Activated T-helper 2 cell treated with anti-CD3 and anti-CD28 coated beads, Interferon-gamma antibody, Interleukin-2, Interleukin-4, amounts not matched to agents 10 μg/mL and 5 μg/mL and 100 μg/mL, durations not matched to agents 14 hours and 24 hours and 36 hours (primary cell): ENCODE measurements at regions of chr7 and their contacts with region 1.

Region 1: DNA sequence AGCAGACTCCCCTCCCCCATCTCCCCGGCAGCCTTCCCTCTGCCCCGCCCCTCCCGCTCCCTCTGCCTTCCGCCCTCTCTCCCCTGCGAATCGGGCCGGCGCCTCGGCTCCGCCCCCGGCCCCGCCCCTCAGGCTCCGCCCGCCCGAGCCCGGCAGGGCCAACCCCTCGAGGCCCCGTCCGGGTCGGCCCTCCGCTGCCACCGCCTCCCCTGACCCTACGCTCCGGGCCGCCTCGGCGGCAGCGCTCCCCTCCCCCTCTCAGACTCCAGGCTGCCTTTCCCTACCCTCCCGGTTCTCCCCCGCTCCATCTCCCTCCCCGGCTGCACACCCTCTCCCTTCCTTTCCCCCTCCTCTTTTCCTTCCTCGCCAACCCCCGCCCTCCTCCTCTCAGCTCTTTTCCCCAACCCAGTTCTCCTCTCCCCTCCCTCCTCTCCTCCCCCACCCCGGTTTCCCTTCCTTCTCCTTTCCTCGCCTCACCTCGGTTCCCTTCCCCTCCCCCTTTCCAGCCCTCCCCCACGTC is 1.6 kb downstream of the ZNF467 start:
- DNase-seq: peak; percentile 78
- H3K4me3 Mint-ChIP-seq: peak overlapping the region; percentile 79
- H3K27ac Mint-ChIP-seq: no peak overlapping the region
- H3K4me1 Mint-ChIP-seq: peaks cover 3% of the 10 kb centered on the region
- H3K27me3 Mint-ChIP-seq: peaks cover 33% of the 10 kb centered on the region

Region 2: DNA sequence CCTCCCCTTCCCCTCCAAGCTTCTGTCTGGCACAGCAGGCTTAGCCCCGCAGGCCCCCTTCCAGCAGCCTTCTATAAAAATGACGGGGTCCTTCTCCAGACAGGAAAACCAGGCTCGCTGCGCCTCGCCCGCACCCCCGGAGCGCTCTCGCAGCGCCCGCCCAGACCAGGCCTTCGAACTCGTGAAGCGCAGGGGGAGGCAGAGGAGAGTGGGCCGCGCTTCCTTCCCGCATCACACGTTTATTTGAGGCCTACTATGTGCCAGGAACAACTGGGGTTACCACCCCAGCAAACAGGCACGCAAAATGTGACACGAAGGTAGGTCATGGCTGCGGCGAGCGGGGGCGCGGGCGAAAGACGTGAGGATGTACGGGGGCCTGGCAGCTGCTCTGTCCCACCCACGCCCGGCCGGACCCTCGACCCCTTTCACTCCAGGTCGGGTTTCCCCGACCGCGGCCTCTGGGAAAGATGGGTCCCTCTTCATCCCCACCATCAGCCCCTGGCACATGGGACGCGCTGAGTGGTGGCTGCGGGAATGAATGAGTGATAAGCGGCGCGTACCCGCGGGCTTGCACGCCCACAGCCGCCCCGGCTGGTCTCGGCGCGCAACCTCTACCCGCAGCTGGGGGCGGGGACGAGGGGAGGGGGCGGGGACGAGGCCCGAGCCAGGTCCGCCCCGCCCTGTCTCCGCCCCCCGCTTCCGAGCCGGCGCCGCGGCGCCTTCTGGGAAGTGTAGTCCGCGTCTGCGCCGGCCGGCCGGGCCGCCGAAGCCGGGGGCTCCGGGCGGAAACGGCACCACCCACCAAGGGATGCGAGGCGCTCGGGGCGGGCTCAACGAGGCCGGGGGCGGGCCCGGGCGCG is 57.5 kb before region 1 on chr7:
- intact Hi-C with region 1: loop called (anchors 2 kb)
- DNase-seq: peak; percentile 79
- H3K4me3 Mint-ChIP-seq: peak overlapping the region; percentile 74
- H3K27ac Mint-ChIP-seq: peak overlapping the region; percentile 28
- H3K4me1 Mint-ChIP-seq: peaks cover 16% of the 10 kb centered on the region
- H3K27me3 Mint-ChIP-seq: no peaks in the 10 kb centered on the region

Region 3: DNA sequence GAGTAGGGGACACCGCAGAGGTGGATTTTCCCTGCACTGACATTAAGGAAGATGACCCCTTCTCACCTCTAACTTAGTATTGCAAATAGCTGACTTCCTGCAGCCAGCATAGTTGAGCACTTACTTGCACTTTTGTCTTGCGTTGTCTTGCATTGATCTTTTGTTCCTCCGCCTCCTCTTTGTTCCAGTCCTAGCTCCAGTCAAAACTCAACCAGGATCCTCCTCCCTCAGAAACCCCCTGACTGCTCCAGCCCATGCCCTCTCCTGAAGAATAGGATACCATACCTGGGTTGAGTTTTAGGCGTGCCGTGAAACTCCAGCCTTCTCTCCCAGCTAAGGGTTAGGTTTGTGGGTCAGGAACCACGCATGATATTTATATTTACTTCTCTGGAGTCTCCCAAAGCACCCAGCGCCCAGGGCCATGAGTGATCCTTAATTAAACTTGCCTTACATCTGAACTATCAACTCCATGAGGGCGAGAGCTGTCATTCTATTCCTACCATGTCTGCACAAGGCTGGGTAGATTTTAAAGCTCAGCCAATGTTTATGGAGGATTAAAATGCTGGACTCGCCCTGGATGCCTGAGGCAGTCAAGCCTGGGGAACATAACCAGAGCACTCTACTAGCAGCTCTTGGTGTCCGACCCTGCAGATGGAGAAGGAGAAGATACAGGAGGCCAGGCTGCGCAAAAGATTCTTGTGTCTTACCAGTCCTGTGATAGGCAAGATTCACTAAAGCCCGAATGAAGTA is 12.5 kb before region 1 on chr7:
- intact Hi-C with region 1: no loop called
- DNase-seq: no peak
- H3K4me3 Mint-ChIP-seq: no peak overlapping the region
- H3K27ac Mint-ChIP-seq: no peak overlapping the region
- H3K4me1 Mint-ChIP-seq: no peaks in the 10 kb centered on the region
- H3K27me3 Mint-ChIP-seq: no peaks in the 10 kb centered on the region

Region 4: GRCh38 chr7:149873074-149873969 is 101.5 kb after region 1 on chr7 and contains the start of gene ATP6V0E2:
- intact Hi-C with region 1: loop called (anchors 5 kb)
- DNase-seq: peak; percentile 91
- H3K4me3 Mint-ChIP-seq: peak within 1 kb of the TSS; percentile 89
- H3K27ac Mint-ChIP-seq: peak within 1 kb of the TSS; percentile 90
- H3K4me1 Mint-ChIP-seq: peaks cover 57% of the 10 kb centered on the region
- H3K27me3 Mint-ChIP-seq: no peaks in the 10 kb centered on the region
- total RNA-seq, gene ATP6V0E2: 50.2 and 54.3 TPM in 2 replicates